CD8-positive, alpha-beta T cell (primary cell): ENCODE measurements at regions of chr11 and their contacts with region 1.

Region 1: GRCh38 chr11:118171269-118172062 is 5.0 kb downstream of the SCN2B start:
- DNase-seq: peak; percentile 45 to 83 (median 72)
- ATAC-seq: peak; percentile 96
- H3K4me3 ChIP-seq: no peak overlapping the region
- H3K4me3 Mint-ChIP-seq: no peak overlapping the region
- H3K27ac ChIP-seq: no peak overlapping the region
- H3K27ac Mint-ChIP-seq: no peak overlapping the region
- H3K4me1 ChIP-seq: peaks cover 8% of the 10 kb centered on the region
- H3K4me1 Mint-ChIP-seq: peaks cover 2% of the 10 kb centered on the region
- H3K27me3 ChIP-seq: no peaks in the 10 kb centered on the region
- H3K27me3 Mint-ChIP-seq: peaks cover 3% of the 10 kb centered on the region
- CTCF ChIP-seq: peak; percentile 95

Region 2: GRCh38 chr11:117426269-117426685 is 745.2 kb before region 1 on chr11:
- CTCF ChIA-PET with region 1: interaction called, 7 read pairs
- POLR2A ChIA-PET with region 1: no interaction called
- intact Hi-C with region 1: loop called in 1 of 2 experiments (anchors 5 kb)
- DNase-seq: peak; percentile 32 to 83 (median 65)
- ATAC-seq: peak; percentile 54
- H3K4me3 ChIP-seq: no peak overlapping the region
- H3K4me3 Mint-ChIP-seq: no peak overlapping the region
- H3K27ac ChIP-seq: no peak overlapping the region
- H3K27ac Mint-ChIP-seq: no peak overlapping the region
- H3K4me1 ChIP-seq: peaks cover 3% of the 10 kb centered on the region
- H3K4me1 Mint-ChIP-seq: no peaks in the 10 kb centered on the region
- H3K27me3 ChIP-seq: peaks cover 0 to 3% of the 10 kb centered on the region in 2 experiments
- H3K27me3 Mint-ChIP-seq: peaks cover 4% of the 10 kb centered on the region
- CTCF ChIP-seq: peak; percentile 97

Region 3: DNA sequence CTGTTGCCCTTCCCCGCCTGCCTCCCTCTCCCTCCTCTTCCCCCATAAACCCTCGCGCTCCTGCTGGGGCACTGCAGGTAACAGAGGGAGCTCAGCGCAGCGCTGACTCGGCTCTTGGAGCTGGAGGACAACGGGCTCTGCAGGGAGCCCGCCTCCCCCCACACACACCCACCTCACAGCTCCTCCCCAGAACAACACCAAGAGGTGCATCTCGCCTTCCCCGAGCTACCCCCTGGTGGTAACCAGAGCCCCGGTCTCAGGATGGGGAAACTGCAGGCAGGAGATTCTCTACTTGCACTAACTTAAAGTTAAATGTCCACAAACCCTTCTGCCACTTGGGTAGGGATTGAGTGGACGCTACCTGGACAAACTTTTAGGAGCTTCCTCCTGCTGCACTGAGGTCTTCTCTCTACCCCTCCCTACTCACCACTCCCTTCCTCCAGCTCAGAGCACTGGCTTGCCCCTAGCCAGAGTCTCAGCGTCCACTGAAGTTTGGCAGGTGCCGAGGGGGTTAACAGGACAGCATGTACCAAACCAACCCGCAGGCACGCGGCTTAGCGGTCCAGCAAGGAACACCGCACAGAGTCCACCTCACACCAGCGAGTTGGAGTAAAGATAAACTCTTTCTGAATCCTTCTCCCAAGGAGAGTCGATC is 14.8 kb before region 1 on chr11:
- CTCF ChIA-PET with region 1: interaction called, 57 read pairs
- POLR2A ChIA-PET with region 1: interaction called, 4 read pairs
- intact Hi-C with region 1: no loop called
- DNase-seq: peak in 5 of 9 experiments; percentile 23 to 64 (median 49)
- ATAC-seq: peak; percentile 83
- H3K4me3 ChIP-seq: no peak overlapping the region
- H3K4me3 Mint-ChIP-seq: no peak overlapping the region
- H3K27ac ChIP-seq: no peak overlapping the region
- H3K27ac Mint-ChIP-seq: no peak overlapping the region
- H3K4me1 ChIP-seq: peaks cover 13% of the 10 kb centered on the region
- H3K4me1 Mint-ChIP-seq: peaks cover 17% of the 10 kb centered on the region
- H3K27me3 ChIP-seq: peaks cover 19 to 39% of the 10 kb centered on the region in 2 experiments
- H3K27me3 Mint-ChIP-seq: peaks cover 52% of the 10 kb centered on the region
- CTCF ChIP-seq: no peak

Region 4: GRCh38 chr11:118216621-118217481 is 45.4 kb after region 1 on chr11:
- CTCF ChIA-PET with region 1: interaction called, 10 read pairs
- POLR2A ChIA-PET with region 1: no interaction called
- intact Hi-C with region 1: no loop called
- DNase-seq: peak in 5 of 9 experiments; percentile 46 to 76 (median 51)
- ATAC-seq: peak; percentile 70
- H3K4me3 ChIP-seq: peak overlapping the region; percentile 20 to 31
- H3K4me3 Mint-ChIP-seq: peak overlapping the region; percentile 81
- H3K27ac ChIP-seq: peak overlapping the region; percentile 10 to 43
- H3K27ac Mint-ChIP-seq: peak overlapping the region; percentile 95
- H3K4me1 ChIP-seq: peaks cover 100% of the 10 kb centered on the region
- H3K4me1 Mint-ChIP-seq: peaks cover 98% of the 10 kb centered on the region
- H3K27me3 ChIP-seq: no peaks in the 10 kb centered on the region
- H3K27me3 Mint-ChIP-seq: no peaks in the 10 kb centered on the region
- CTCF ChIP-seq: no peak

Region 5: DNA sequence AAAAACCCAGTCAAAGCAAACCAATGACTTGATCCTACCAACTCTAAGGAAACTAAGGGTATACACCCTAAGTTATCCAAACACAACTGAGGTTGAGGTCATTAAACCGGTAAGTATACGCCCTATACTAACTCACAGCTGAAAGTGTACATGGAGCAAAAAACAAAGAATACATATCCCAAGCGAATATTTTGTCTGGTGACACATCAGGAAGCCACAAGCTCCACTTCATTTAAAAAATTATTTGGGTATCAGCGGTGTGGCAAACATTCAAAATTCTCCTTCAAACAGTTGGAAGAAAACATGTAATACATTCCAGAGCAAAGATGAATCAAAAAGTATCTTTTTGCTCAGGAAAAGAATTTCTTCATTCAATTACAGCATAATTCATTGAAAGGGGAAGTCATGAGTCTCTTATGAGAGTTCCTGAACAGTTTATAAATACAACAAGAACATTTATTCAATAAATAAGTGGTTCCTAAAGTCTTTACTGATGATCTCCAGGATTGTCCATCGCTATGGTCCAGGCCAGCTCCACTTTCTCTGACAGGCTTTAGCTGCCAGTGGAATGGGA is 57.9 kb after region 1 on chr11:
- CTCF ChIA-PET with region 1: no interaction called
- POLR2A ChIA-PET with region 1: no interaction called
- intact Hi-C with region 1: no loop called
- DNase-seq: no peak
- ATAC-seq: no peak
- H3K4me3 ChIP-seq: no peak overlapping the region
- H3K4me3 Mint-ChIP-seq: peak overlapping the region; percentile 46
- H3K27ac ChIP-seq: peak overlapping the region; percentile 9 to 46
- H3K27ac Mint-ChIP-seq: no peak overlapping the region
- H3K4me1 ChIP-seq: peaks cover 65% of the 10 kb centered on the region
- H3K4me1 Mint-ChIP-seq: peaks cover 43% of the 10 kb centered on the region
- H3K27me3 ChIP-seq: no peaks in the 10 kb centered on the region
- H3K27me3 Mint-ChIP-seq: no peaks in the 10 kb centered on the region
- CTCF ChIP-seq: no peak

Region 6: GRCh38 chr11:118290923-118291322 is 119.5 kb after region 1 on chr11:
- CTCF ChIA-PET with region 1: interaction called, 19 read pairs
- POLR2A ChIA-PET with region 1: no interaction called
- intact Hi-C with region 1: no loop called
- DNase-seq: peak in 7 of 9 experiments; percentile 16 to 74 (median 37)
- ATAC-seq: peak; percentile 43
- H3K4me3 ChIP-seq: no peak overlapping the region
- H3K4me3 Mint-ChIP-seq: no peak overlapping the region
- H3K27ac ChIP-seq: no peak overlapping the region
- H3K27ac Mint-ChIP-seq: no peak overlapping the region
- H3K4me1 ChIP-seq: peaks cover 7% of the 10 kb centered on the region
- H3K4me1 Mint-ChIP-seq: peaks cover 12% of the 10 kb centered on the region
- H3K27me3 ChIP-seq: no peaks in the 10 kb centered on the region
- H3K27me3 Mint-ChIP-seq: no peaks in the 10 kb centered on the region
- CTCF ChIP-seq: peak; percentile 42